Sigmoid colon (tissue), 7 donors: ENCODE measurements at regions of chr10 and their contacts with region 1.

Region 1: GRCh38 chr10:123967396-123968243 is 76.0 kb upstream of the CPXM2 start:
- DNase-seq: peak; percentile 88
- H3K4me3 ChIP-seq: no peak overlapping the region
- H3K27ac ChIP-seq: peak overlapping the region in 2 of 4 donors; percentile 8 to 57
- H3K4me1 ChIP-seq: peaks cover 0 to 53% (median 51%) of the 10 kb centered on the region in 4 donors
- H3K27me3 ChIP-seq: peaks cover 3 to 34% (median 19%) of the 10 kb centered on the region in 3 donors
- CTCF ChIP-seq: peak; percentile 81 to 93 (median 89)
- EP300 ChIP-seq: no peak
- POLR2A ChIP-seq: no peak

Region 2: GRCh38 chr10:123132576-123133477 is 834.8 kb before region 1 on chr10:
- intact Hi-C with region 1: loop called (anchors 10 kb)
- DNase-seq: peak; percentile 91
- H3K4me3 ChIP-seq: peak overlapping the region in 1 of 4 donors; percentile 17
- H3K27ac ChIP-seq: no peak overlapping the region
- H3K4me1 ChIP-seq: peaks cover 0 to 53% (median 50%) of the 10 kb centered on the region in 4 donors
- H3K27me3 ChIP-seq: peaks cover 48 to 94% (median 67%) of the 10 kb centered on the region in 3 donors
- CTCF ChIP-seq: peak; percentile 53 to 89 (median 84)
- EP300 ChIP-seq: no peak
- POLR2A ChIP-seq: no peak

Region 3: GRCh38 chr10:123582084-123582989 is 385.3 kb before region 1 on chr10:
- intact Hi-C with region 1: loop called (anchors 1 kb)
- DNase-seq: peak; percentile 89
- H3K4me3 ChIP-seq: no peak overlapping the region
- H3K27ac ChIP-seq: no peak overlapping the region
- H3K4me1 ChIP-seq: peaks cover 0 to 25% (median 18%) of the 10 kb centered on the region in 4 donors
- H3K27me3 ChIP-seq: no peaks in the 10 kb centered on the region
- CTCF ChIP-seq: peak; percentile 72 to 85 (median 76)
- EP300 ChIP-seq: no peak
- POLR2A ChIP-seq: no peak

Region 4: DNA sequence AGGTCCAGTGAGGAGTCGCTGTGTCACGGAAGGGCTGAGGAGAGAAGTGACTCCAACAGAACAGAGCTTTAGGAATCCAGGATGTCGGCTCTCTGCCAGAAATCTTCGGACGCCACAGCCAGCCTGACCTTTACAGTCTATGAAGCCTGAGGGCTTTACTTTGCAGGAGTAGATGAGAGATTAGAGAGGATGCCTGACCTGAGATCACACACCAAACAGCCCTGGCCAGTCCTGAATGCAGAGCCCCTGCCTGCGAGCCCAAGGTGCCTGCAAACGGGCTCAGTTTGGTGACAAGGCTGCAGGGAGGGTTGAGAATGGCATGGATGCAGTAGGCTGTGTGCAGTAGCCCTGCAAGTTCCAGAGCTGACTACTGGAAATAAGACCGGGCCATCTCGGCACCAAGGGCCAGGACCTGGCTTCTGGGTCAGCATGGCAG is 223.6 kb before region 1 on chr10:
- intact Hi-C with region 1: loop called (anchors 5 kb)
- DNase-seq: no peak
- H3K4me3 ChIP-seq: no peak overlapping the region
- H3K27ac ChIP-seq: peak overlapping the region; percentile 6 to 59 (median 36)
- H3K4me1 ChIP-seq: peaks cover 0 to 53% (median 37%) of the 10 kb centered on the region in 4 donors
- H3K27me3 ChIP-seq: no peaks in the 10 kb centered on the region
- CTCF ChIP-seq: no peak
- EP300 ChIP-seq: no peak
- POLR2A ChIP-seq: no peak

Region 5: GRCh38 chr10:123782026-123782425 is 185.6 kb before region 1 on chr10:
- intact Hi-C with region 1: no loop called
- DNase-seq: no peak
- H3K4me3 ChIP-seq: no peak overlapping the region
- H3K27ac ChIP-seq: peak overlapping the region; percentile 3 to 55 (median 44)
- H3K4me1 ChIP-seq: peaks cover 0 to 72% (median 53%) of the 10 kb centered on the region in 4 donors
- H3K27me3 ChIP-seq: no peaks in the 10 kb centered on the region
- CTCF ChIP-seq: no peak
- EP300 ChIP-seq: no peak
- POLR2A ChIP-seq: no peak

Region 6: GRCh38 chr10:123821136-123821535 is 146.5 kb before region 1 on chr10:
- intact Hi-C with region 1: no loop called
- DNase-seq: no peak
- H3K4me3 ChIP-seq: no peak overlapping the region
- H3K27ac ChIP-seq: peak overlapping the region in 2 of 4 donors; percentile 9 to 42
- H3K4me1 ChIP-seq: peaks cover 0 to 39% (median 27%) of the 10 kb centered on the region in 4 donors
- H3K27me3 ChIP-seq: no peaks in the 10 kb centered on the region
- CTCF ChIP-seq: no peak
- EP300 ChIP-seq: no peak
- POLR2A ChIP-seq: no peak

Region 7: DNA sequence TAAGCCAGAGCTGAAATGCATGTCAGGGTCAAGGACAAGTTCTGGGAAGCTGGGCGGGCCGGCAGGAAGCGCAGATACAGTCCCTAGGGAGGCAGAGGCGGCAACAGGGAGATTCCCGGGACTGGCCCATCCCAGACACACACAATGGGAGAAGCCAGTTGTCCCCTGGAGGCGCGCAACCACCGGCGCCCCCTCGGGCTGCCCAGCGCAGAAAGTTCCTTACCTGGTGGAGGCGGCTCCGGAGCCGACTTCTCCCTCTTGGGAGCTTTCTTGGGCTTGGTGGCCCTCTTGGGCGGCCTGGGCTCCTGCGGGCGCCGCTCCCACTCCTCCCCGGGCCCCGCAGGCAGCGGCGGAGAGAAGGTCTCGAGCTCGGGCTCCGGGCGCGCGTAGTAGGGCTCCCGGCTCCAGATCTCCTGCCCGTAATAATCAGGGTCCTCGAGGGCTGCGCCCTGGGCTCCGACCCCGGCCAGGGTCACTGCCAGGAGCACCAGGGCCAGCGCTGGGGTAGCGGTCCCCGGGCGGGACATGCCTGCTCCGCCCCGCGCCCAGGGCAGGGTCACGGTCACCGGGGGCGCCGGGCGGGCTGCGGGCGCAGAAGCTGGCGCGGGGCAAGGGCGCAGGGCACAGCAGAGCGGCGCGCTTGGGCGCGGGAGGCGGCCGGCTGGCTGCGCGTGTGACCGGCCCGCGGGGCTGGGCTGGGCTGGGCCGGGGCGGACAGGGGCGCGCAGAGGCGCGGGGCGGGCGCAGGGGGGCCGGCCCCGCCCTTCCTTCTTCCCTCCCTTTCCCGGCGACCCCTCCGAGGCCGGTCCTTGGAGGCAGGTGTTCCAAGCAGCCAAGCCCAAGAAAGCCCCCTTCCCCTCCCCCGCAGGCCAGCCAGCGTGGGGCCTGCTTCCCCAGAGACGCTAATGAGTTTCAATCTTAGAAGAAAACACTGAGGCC is 76.2 kb before region 1 on chr10 and contains the start of gene CPXM2:
- intact Hi-C with region 1: loop called (anchors 5 kb)
- DNase-seq: no peak
- H3K4me3 ChIP-seq: peak within 1 kb of the TSS; percentile 64 to 87 (median 84)
- H3K27ac ChIP-seq: peak within 1 kb of the TSS; percentile 96 to 99 (median 98)
- H3K4me1 ChIP-seq: peaks cover 2 to 72% (median 56%) of the 10 kb centered on the region in 4 donors
- H3K27me3 ChIP-seq: peaks cover 0 to 6% (median 0%) of the 10 kb centered on the region in 3 donors
- CTCF ChIP-seq: no peak
- EP300 ChIP-seq: no peak
- POLR2A ChIP-seq: peak in 1 of 2 donors; percentile 24
- total RNA-seq, gene CPXM2: 48.5 to 153 (median 106) TPM

Region 8: GRCh38 chr10:123913688-123914268 is 53.8 kb before region 1 on chr10:
- intact Hi-C with region 1: loop called (anchors 5 kb)
- DNase-seq: no peak
- H3K4me3 ChIP-seq: no peak overlapping the region
- H3K27ac ChIP-seq: peak overlapping the region in 3 of 4 donors; percentile 2 to 66 (median 63)
- H3K4me1 ChIP-seq: peaks cover 0 to 38% (median 25%) of the 10 kb centered on the region in 4 donors
- H3K27me3 ChIP-seq: no peaks in the 10 kb centered on the region
- CTCF ChIP-seq: no peak
- EP300 ChIP-seq: no peak
- POLR2A ChIP-seq: no peak